CD4-positive, alpha-beta memory T cell (primary cell): ENCODE measurements at regions of chr16 and their contacts with region 1.

Region 1: GRCh38 chr16:67561824-67562525 is 351 bp upstream of the CTCF start:
- DNase-seq: peak; percentile 96 to 98 (median 97)
- H3K4me3 ChIP-seq: peak overlapping the region; percentile 61 to 78
- H3K4me3 Mint-ChIP-seq: peak overlapping the region; percentile 89 to 97 (median 91)
- H3K27ac ChIP-seq: peak overlapping the region; percentile 73
- H3K27ac Mint-ChIP-seq: peak overlapping the region; percentile 92 to 97 (median 96)
- H3K4me1 ChIP-seq: peaks cover 52% of the 10 kb centered on the region
- H3K4me1 Mint-ChIP-seq: peaks cover 23 to 53% (median 37%) of the 10 kb centered on the region in 4 donors
- H3K27me3 ChIP-seq: no peaks in the 10 kb centered on the region
- H3K27me3 Mint-ChIP-seq: no peaks in the 10 kb centered on the region

Region 2: GRCh38 chr16:67480833-67481560 is 81.0 kb before region 1 on chr16 and contains the start of gene ATP6V0D1:
- CTCF ChIA-PET with region 1: interaction called, 3 read pairs
- POLR2A ChIA-PET with region 1: interaction called, 13 read pairs
- intact Hi-C with region 1: loop called (anchors 1 kb)
- DNase-seq: peak; percentile 97 to 99 (median 98)
- H3K4me3 ChIP-seq: peak within 1 kb of the TSS; percentile 97 to 99
- H3K4me3 Mint-ChIP-seq: peak within 1 kb of the TSS; percentile 94 to 100 (median 99)
- H3K27ac ChIP-seq: peak within 1 kb of the TSS; percentile 99
- H3K27ac Mint-ChIP-seq: peak within 1 kb of the TSS; percentile 97 to 100 (median 98)
- H3K4me1 ChIP-seq: peaks cover 43% of the 10 kb centered on the region
- H3K4me1 Mint-ChIP-seq: peaks cover 25 to 65% (median 44%) of the 10 kb centered on the region in 4 donors
- H3K27me3 ChIP-seq: no peaks in the 10 kb centered on the region
- H3K27me3 Mint-ChIP-seq: no peaks in the 10 kb centered on the region
- total RNA-seq, gene ATP6V0D1: 42.8 to 49.0 TPM

Region 3: GRCh38 chr16:67546761-67547422 is 15.1 kb before region 1 on chr16:
- CTCF ChIA-PET with region 1: interaction called, 361 read pairs
- POLR2A ChIA-PET with region 1: interaction called, 706 read pairs
- intact Hi-C with region 1: loop called (anchors 1 kb)
- DNase-seq: peak; percentile 66 to 73 (median 69)
- H3K4me3 ChIP-seq: peak overlapping the region; percentile 41 to 48
- H3K4me3 Mint-ChIP-seq: peak overlapping the region; percentile 58 to 91 (median 82)
- H3K27ac ChIP-seq: peak overlapping the region; percentile 42
- H3K27ac Mint-ChIP-seq: peak overlapping the region; percentile 60 to 96 (median 95)
- H3K4me1 ChIP-seq: peaks cover 43% of the 10 kb centered on the region
- H3K4me1 Mint-ChIP-seq: peaks cover 29 to 65% (median 38%) of the 10 kb centered on the region in 4 donors
- H3K27me3 ChIP-seq: no peaks in the 10 kb centered on the region
- H3K27me3 Mint-ChIP-seq: no peaks in the 10 kb centered on the region

Region 4: GRCh38 chr16:67641779-67642708 is 80.1 kb after region 1 on chr16:
- CTCF ChIA-PET with region 1: interaction called, 77 read pairs
- POLR2A ChIA-PET with region 1: interaction called, 91 read pairs
- intact Hi-C with region 1: loop called (anchors 1 kb)
- DNase-seq: no peak
- H3K4me3 ChIP-seq: no peak overlapping the region
- H3K4me3 Mint-ChIP-seq: no peak overlapping the region
- H3K27ac ChIP-seq: no peak overlapping the region
- H3K27ac Mint-ChIP-seq: peak overlapping the region in 1 of 7 donors; percentile 13
- H3K4me1 ChIP-seq: peaks cover 30% of the 10 kb centered on the region
- H3K4me1 Mint-ChIP-seq: peaks cover 2 to 28% (median 11%) of the 10 kb centered on the region in 4 donors
- H3K27me3 ChIP-seq: no peaks in the 10 kb centered on the region
- H3K27me3 Mint-ChIP-seq: no peaks in the 10 kb centered on the region

Region 5: GRCh38 chr16:67667817-67668494 is 106.0 kb after region 1 on chr16:
- CTCF ChIA-PET with region 1: interaction called, 6 read pairs
- POLR2A ChIA-PET with region 1: interaction called, 55 read pairs
- intact Hi-C with region 1: loop called (anchors 1 kb)
- DNase-seq: peak; percentile 78 to 90 (median 82)
- H3K4me3 ChIP-seq: peak overlapping the region in 1 of 2 donors; percentile 89
- H3K4me3 Mint-ChIP-seq: peak overlapping the region; percentile 40 to 92 (median 63)
- H3K27ac ChIP-seq: peak overlapping the region; percentile 64
- H3K27ac Mint-ChIP-seq: peak overlapping the region in 6 of 7 donors; percentile 41 to 75 (median 62)
- H3K4me1 ChIP-seq: peaks cover 24% of the 10 kb centered on the region
- H3K4me1 Mint-ChIP-seq: peaks cover 8 to 49% (median 15%) of the 10 kb centered on the region in 4 donors
- H3K27me3 ChIP-seq: no peaks in the 10 kb centered on the region
- H3K27me3 Mint-ChIP-seq: no peaks in the 10 kb centered on the region

Region 6: GRCh38 chr16:67697422-67698185 is 135.6 kb after region 1 on chr16:
- CTCF ChIA-PET with region 1: no interaction called
- POLR2A ChIA-PET with region 1: no interaction called
- intact Hi-C with region 1: no loop called
- DNase-seq: no peak
- H3K4me3 ChIP-seq: no peak overlapping the region
- H3K4me3 Mint-ChIP-seq: no peak overlapping the region
- H3K27ac ChIP-seq: no peak overlapping the region
- H3K27ac Mint-ChIP-seq: peak overlapping the region in 1 of 7 donors; percentile 22
- H3K4me1 ChIP-seq: peaks cover 1% of the 10 kb centered on the region
- H3K4me1 Mint-ChIP-seq: peaks cover 5 to 10% (median 6%) of the 10 kb centered on the region in 4 donors
- H3K27me3 ChIP-seq: no peaks in the 10 kb centered on the region
- H3K27me3 Mint-ChIP-seq: no peaks in the 10 kb centered on the region

Region 7: GRCh38 chr16:67806428-67807147 is 244.6 kb after region 1 on chr16 and contains the starts of genes RANBP10 and TSNAXIP1:
- CTCF ChIA-PET with region 1: no interaction called
- POLR2A ChIA-PET with region 1: interaction called, 3 read pairs
- intact Hi-C with region 1: loop called (anchors 1 kb)
- DNase-seq: peak; percentile 97 to 99 (median 99)
- H3K4me3 ChIP-seq: peak within 1 kb of the TSS; percentile 91 to 93
- H3K4me3 Mint-ChIP-seq: peak within 1 kb of the TSS; percentile 88 to 95 (median 90)
- H3K27ac ChIP-seq: peak within 1 kb of the TSS; percentile 95
- H3K27ac Mint-ChIP-seq: peak within 1 kb of the TSS; percentile 85 to 98 (median 95)
- H3K4me1 ChIP-seq: peaks cover 43% of the 10 kb centered on the region
- H3K4me1 Mint-ChIP-seq: peaks cover 26 to 52% (median 36%) of the 10 kb centered on the region in 4 donors
- H3K27me3 ChIP-seq: no peaks in the 10 kb centered on the region
- H3K27me3 Mint-ChIP-seq: no peaks in the 10 kb centered on the region
- total RNA-seq, gene RANBP10: 25.6 to 27.8 TPM
- total RNA-seq, gene TSNAXIP1: 0.44 to 0.64 TPM

Region 8: GRCh38 chr16:67841764-67842508 is 280.0 kb after region 1 on chr16 and contains the start of gene THAP11:
- CTCF ChIA-PET with region 1: no interaction called
- POLR2A ChIA-PET with region 1: interaction called, 5 read pairs
- intact Hi-C with region 1: loop called (anchors 2 kb)
- DNase-seq: peak; percentile 94 to 98 (median 95)
- H3K4me3 ChIP-seq: peak within 1 kb of the TSS; percentile 74 to 99
- H3K4me3 Mint-ChIP-seq: peak within 1 kb of the TSS; percentile 93 to 98 (median 96)
- H3K27ac ChIP-seq: peak within 1 kb of the TSS; percentile 98
- H3K27ac Mint-ChIP-seq: peak within 1 kb of the TSS; percentile 97 to 99 (median 98)
- H3K4me1 ChIP-seq: peaks cover 38% of the 10 kb centered on the region
- H3K4me1 Mint-ChIP-seq: peaks cover 25 to 48% (median 36%) of the 10 kb centered on the region in 4 donors
- H3K27me3 ChIP-seq: no peaks in the 10 kb centered on the region
- H3K27me3 Mint-ChIP-seq: no peaks in the 10 kb centered on the region
- total RNA-seq, gene THAP11: 56.8 to 58.4 TPM